ENCODE measurements at regions of chr19 and their contacts with region 1.

Region 1: GRCh38 chr19:1551068-1552040 is 16.8 kb downstream of the MEX3D start:
- H3K4me3 ChIP-seq: no peak overlapping the region
- H3K27ac ChIP-seq: no peak overlapping the region
- H3K4me1 ChIP-seq: no peaks in the 10 kb centered on the region
- CTCF ChIP-seq: no peak

Region 2: GRCh38 chr19:1516395-1516753 is 35.0 kb before region 1 on chr19:
- CTCF ChIA-PET with region 1: no interaction called
- POLR2A ChIA-PET with region 1: no interaction called
- H3K4me3 ChIP-seq: no peak overlapping the region
- H3K27ac ChIP-seq: no peak overlapping the region
- H3K4me1 ChIP-seq: no peaks in the 10 kb centered on the region
- CTCF ChIP-seq: no peak

Region 3: GRCh38 chr19:1540365-1540925 is 10.9 kb before region 1 on chr19:
- CTCF ChIA-PET with region 1: interaction called, 12 read pairs
- POLR2A ChIA-PET with region 1: no interaction called
- H3K4me3 ChIP-seq: no peak overlapping the region
- H3K27ac ChIP-seq: no peak overlapping the region
- H3K4me1 ChIP-seq: no peaks in the 10 kb centered on the region
- CTCF ChIP-seq: no peak

Region 4: DNA sequence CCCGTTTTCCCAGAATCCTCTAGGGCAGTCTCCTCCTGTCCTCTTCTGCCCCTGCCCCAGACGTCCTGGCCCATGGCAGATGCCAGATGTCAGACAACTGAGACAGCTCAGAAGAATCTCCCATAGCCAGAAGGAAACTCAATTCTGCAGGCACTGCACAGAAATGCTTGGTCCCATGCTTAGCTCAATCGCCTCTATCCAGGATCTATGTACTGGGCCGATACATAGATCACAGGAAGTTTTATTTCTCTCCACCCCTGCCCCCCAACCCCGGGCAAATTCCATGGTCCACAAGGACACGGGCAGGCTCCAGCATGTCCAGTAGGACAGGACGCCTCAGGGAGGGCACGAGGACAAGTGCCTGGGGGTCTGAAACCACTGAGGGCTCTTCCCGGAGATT is 36.5 kb after region 1 on chr19:
- CTCF ChIA-PET with region 1: interaction called, 11 read pairs
- POLR2A ChIA-PET with region 1: interaction called, 4 read pairs
- H3K4me3 ChIP-seq: no peak overlapping the region
- H3K27ac ChIP-seq: peak overlapping the region; percentile 55
- H3K4me1 ChIP-seq: no peaks in the 10 kb centered on the region
- CTCF ChIP-seq: no peak

Region 5: GRCh38 chr19:1789261-1790041 is 238.1 kb after region 1 on chr19:
- CTCF ChIA-PET with region 1: interaction called, 12 read pairs
- POLR2A ChIA-PET with region 1: no interaction called
- H3K4me3 ChIP-seq: no peak overlapping the region
- H3K27ac ChIP-seq: no peak overlapping the region
- H3K4me1 ChIP-seq: no peaks in the 10 kb centered on the region
- CTCF ChIP-seq: no peak

Measured in HEK293 (cell line).